A673 (cell line): ENCODE measurements at regions of chr2 and their contacts with region 1.

Region 1: GRCh38 chr2:160109936-160110673 is 47.7 kb upstream of the PLA2R1 start:
- DNase-seq: peak; percentile 81
- H3K4me3 ChIP-seq: no peak overlapping the region
- H3K27ac ChIP-seq: no peak overlapping the region
- H3K4me1 ChIP-seq: no peaks in the 10 kb centered on the region
- H3K27me3 ChIP-seq: no peaks in the 10 kb centered on the region
- CTCF ChIP-seq: peak; percentile 81

Region 2: GRCh38 chr2:160157861-160158829 is 48.0 kb after region 1 on chr2:
- CTCF ChIA-PET with region 1: no interaction called
- POLR2A ChIA-PET with region 1: no interaction called
- intact Hi-C with region 1: no loop called
- DNase-seq: no peak
- H3K4me3 ChIP-seq: no peak overlapping the region
- H3K27ac ChIP-seq: no peak overlapping the region
- H3K4me1 ChIP-seq: no peaks in the 10 kb centered on the region
- H3K27me3 ChIP-seq: no peaks in the 10 kb centered on the region
- CTCF ChIP-seq: no peak

Region 3: DNA sequence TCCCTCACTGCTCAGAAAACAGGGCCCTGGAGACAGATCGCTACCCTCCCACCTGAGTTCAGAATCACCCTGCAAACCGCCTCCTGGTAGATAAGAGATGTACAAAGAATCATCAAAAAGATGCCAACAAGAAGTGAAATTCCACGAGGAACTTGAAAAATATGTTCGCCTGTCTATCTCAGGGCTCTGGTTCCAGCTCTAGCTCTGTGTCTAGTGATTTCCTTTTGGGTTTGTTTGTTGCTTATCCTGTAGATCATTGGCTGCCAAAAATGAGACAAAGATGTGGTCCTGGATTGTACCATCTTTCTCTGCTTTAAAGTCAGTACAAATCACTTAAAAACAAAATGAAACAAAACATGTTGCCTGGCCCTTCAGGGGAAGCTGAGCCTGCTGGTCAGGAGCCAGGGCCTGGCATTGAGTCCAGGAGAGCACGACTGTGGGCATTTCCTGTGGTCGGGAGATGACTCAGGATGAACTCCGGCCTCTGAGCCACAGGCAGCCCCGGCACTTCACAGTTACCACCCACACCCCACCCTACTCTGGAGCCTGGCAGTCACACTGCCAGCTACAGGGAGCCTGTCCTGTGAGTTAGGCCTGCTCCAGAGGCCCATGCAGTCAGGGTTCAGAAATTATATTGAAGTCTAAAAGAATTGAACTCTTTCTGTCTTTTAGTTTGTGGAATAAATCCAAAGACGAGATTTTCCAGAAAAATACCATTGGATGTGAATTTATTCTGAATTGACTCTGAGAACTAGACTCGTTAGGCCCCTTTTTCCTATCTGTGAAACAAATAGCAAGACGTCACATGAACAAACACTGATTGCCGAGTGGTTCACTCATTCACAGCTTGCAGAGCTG is 97.9 kb after region 1 on chr2:
- CTCF ChIA-PET with region 1: no interaction called
- POLR2A ChIA-PET with region 1: no interaction called
- intact Hi-C with region 1: loop called (anchors 5 kb)
- DNase-seq: no peak
- H3K4me3 ChIP-seq: no peak overlapping the region
- H3K27ac ChIP-seq: no peak overlapping the region
- H3K4me1 ChIP-seq: no peaks in the 10 kb centered on the region
- H3K27me3 ChIP-seq: no peaks in the 10 kb centered on the region
- CTCF ChIP-seq: no peak

Region 4: GRCh38 chr2:160970052-160970965 is 860.2 kb after region 1 on chr2:
- CTCF ChIA-PET with region 1: interaction called, 9 read pairs
- POLR2A ChIA-PET with region 1: no interaction called
- intact Hi-C with region 1: loop called (anchors 1 kb)
- DNase-seq: peak; percentile 84
- H3K4me3 ChIP-seq: no peak overlapping the region
- H3K27ac ChIP-seq: no peak overlapping the region
- H3K4me1 ChIP-seq: peaks cover 3% of the 10 kb centered on the region
- H3K27me3 ChIP-seq: no peaks in the 10 kb centered on the region
- CTCF ChIP-seq: peak; percentile 83

Region 5: DNA sequence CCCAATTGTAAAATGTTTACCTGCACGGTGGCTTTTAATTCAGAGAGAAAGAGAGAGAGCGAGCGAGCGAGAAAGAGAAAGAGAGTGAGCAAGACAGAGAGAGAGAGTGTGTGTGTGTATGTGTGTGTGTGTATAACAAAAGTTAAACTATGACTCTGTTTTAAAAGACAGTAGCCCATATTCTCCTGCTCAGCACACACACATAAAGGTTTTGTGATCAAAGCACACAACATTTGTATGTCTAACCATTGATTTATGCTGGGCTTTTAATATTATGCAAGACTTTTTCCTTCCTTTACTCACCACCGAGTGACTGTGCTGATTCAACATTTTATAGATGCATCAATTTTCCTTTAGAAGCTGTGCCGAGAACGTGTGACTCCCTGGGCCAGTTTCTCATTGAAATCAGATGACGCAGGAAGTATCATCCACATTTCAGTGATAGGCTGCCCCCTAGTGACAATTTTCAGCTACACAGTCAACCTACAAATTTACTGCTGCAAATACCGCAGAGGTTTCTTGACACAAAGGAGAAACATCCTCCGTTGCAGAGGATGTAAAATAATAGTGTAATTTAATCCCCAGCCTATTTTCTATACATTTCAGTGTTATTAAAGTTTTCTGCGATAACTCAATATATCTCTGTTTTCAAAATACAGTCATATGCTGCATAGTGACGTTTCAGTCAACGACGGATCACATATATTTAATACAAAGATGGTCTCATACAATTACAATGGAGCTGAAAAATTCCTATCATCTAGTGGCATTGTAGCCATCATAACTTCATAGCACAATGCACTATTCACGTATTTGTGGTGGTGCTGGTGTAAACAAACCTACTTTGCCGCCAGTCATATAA is 884.3 kb after region 1 on chr2:
- CTCF ChIA-PET with region 1: interaction called, 7 read pairs
- POLR2A ChIA-PET with region 1: no interaction called
- intact Hi-C with region 1: loop called (anchors 2 kb)
- DNase-seq: peak; percentile 89
- H3K4me3 ChIP-seq: no peak overlapping the region
- H3K27ac ChIP-seq: no peak overlapping the region
- H3K4me1 ChIP-seq: peaks cover 7% of the 10 kb centered on the region
- H3K27me3 ChIP-seq: no peaks in the 10 kb centered on the region
- CTCF ChIP-seq: peak; percentile 84

Region 6: DNA sequence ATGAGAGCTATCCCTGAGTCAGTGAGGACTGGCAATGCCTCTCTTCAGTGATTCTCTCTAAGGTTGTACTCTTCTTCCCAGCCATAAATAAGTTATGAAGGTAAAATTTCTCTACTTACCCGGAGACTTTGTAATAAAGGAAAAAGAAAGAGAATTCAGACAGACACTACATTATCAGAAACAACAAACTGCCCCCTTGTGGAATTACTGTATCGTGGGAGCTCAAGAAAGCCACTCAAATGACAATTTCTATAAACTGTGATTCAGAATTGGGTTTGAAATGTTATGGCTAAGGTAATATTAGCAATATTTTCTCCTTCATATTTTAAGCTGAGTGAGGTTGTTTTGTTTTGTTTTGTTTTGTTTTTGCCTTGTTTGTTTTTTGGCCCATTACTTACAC is 894.3 kb after region 1 on chr2:
- CTCF ChIA-PET with region 1: interaction called, 10 read pairs
- POLR2A ChIA-PET with region 1: no interaction called
- intact Hi-C with region 1: no loop called
- DNase-seq: peak; percentile 34
- H3K4me3 ChIP-seq: no peak overlapping the region
- H3K27ac ChIP-seq: no peak overlapping the region
- H3K4me1 ChIP-seq: no peaks in the 10 kb centered on the region
- H3K27me3 ChIP-seq: no peaks in the 10 kb centered on the region
- CTCF ChIP-seq: peak; percentile 69

Region 7: DNA sequence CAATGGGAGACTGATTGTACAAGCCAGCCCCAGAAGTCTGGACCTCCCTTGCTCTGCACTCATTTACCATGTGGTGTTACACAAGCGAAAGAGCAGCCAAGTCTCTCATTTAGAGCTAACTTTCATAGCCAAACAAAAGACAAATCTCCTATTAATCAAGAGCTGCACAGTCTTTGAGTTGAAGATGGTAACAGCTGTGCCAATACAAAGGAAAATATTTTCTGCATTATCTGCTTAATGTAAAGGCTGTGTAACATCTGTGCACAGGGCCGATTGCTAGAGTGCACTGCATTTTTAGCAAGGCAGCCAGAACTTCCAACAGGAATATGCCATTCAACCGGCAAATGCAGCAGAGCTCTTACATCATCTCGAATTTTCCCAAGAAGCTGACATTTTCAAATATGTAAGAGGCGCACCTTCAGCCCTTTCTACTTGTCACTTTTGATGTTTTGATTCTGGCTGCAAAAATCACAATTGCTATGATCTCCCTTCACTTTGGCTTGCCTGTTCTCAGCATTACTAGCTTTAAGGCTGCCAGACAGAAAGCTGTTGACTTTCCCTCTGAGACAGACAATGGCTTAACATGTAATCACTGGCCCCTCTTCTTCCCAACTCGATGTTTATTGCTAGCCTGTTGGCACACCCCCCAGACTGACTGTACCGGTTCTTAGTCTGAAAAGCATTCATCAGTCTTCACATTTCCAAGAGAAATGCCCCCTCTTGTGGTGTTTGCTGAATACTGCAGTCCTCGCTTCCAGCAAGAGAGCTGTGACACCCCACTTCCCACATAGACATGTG is 953.3 kb after region 1 on chr2:
- CTCF ChIA-PET with region 1: interaction called, 12 read pairs
- POLR2A ChIA-PET with region 1: no interaction called
- intact Hi-C with region 1: loop called (anchors 2 kb)
- DNase-seq: peak; percentile 84
- H3K4me3 ChIP-seq: no peak overlapping the region
- H3K27ac ChIP-seq: no peak overlapping the region
- H3K4me1 ChIP-seq: peaks cover 6% of the 10 kb centered on the region
- H3K27me3 ChIP-seq: no peaks in the 10 kb centered on the region
- CTCF ChIP-seq: peak; percentile 93